HCT116 (cell line): ENCODE measurements at regions of chrX and their contacts with region 1.

Region 1: GRCh38 chrX:53071604-53072417 is 10.4 kb upstream of the TSPYL2 start:
- DNase-seq: peak; percentile 50
- ATAC-seq: peak; percentile 83
- H3K4me3 ChIP-seq: peak overlapping the region; percentile 42 to 60
- H3K27ac ChIP-seq: peak overlapping the region; percentile 63
- H3K4me1 ChIP-seq: peaks cover 4 to 26% of the 10 kb centered on the region in 2 experiments; a peak in 3 of 4 replicates
- H3K27me3 ChIP-seq: no peaks in the 10 kb centered on the region
- CTCF ChIP-seq: peak; percentile 54 to 59 (median 56); a peak in 4 of 6 replicates
- POLR2A ChIP-seq: no peak
- RAD21 ChIP-seq: peak; percentile 72

Region 2: GRCh38 chrX:53081925-53082772 is 10.3 kb after region 1 on chrX and contains the start of gene TSPYL2:
- CTCF ChIA-PET with region 1: interaction called, 4 read pairs
- POLR2A ChIA-PET with region 1: interaction called, 25 read pairs
- RAD21 ChIA-PET with region 1: no interaction called
- intact Hi-C with region 1: no loop called
- DNase-seq: peak; percentile 85
- ATAC-seq: peak; percentile 95
- H3K4me3 ChIP-seq: peak within 1 kb of the TSS; percentile 63 to 70
- H3K27ac ChIP-seq: peak within 1 kb of the TSS; percentile 51; the same call in 1 of the 2 replicates
- H3K4me1 ChIP-seq: peaks cover 0 to 7% of the 10 kb centered on the region in 2 experiments; a peak in 1 of 4 replicates
- H3K27me3 ChIP-seq: no peaks in the 10 kb centered on the region
- CTCF ChIP-seq: no peak
- POLR2A ChIP-seq: peak; percentile 97
- RAD21 ChIP-seq: no peak
- total RNA-seq, gene TSPYL2: 19.2 TPM

Region 3: DNA sequence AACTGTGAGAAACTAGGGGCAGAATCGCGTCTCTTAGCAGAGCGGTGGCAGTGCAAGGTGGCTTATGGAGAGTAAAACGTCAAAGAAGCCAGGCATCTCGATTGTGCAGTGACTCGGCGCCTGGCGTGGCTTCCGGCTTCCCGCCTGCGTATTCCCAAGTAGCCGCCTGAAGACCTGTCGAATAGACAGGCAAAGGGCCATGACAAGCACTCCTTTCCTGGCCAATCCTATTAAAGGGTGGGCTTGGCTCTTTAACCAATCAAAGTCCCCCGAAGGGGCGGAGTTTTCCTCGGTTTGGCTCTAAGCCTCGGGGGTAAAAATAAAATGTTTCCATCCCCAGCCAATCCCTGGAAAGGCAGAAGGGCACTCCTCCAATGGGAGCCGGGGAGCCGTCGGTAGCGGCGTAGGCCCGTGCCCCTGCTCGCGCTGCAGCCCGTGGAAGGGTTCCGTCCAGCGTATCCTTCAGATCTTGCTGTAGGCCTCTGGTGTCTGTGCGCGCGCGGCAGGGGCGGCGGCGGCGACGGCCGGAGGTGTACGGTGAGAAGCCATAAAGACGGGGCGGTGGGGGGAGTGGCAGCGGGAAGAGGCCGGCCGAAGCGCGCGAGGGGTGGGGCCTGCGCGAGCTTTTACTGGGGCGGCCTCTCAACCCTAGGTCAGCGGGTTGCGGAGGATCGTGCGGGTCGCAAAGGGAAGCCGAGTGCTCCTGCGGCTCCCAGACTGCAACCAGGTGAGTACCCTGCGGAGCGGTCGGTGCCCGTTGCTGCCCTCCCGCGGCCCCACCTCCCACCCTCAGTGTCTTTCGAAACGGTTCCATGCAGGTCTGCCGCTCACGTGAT is 22.2 kb after region 1 on chrX and contains the start of gene KANTR:
- CTCF ChIA-PET with region 1: no interaction called
- POLR2A ChIA-PET with region 1: no interaction called
- RAD21 ChIA-PET with region 1: no interaction called
- intact Hi-C with region 1: loop called (anchors 1 kb)
- DNase-seq: peak; percentile 90
- ATAC-seq: peak; percentile 88
- H3K4me3 ChIP-seq: peak within 1 kb of the TSS; percentile 67 to 75
- H3K27ac ChIP-seq: peak within 1 kb of the TSS; percentile 80
- H3K4me1 ChIP-seq: peaks cover 3 to 21% of the 10 kb centered on the region in 2 experiments; a peak in 3 of 4 replicates
- H3K27me3 ChIP-seq: no peaks in the 10 kb centered on the region
- CTCF ChIP-seq: no peak
- POLR2A ChIP-seq: no peak
- RAD21 ChIP-seq: no peak
- total RNA-seq, gene KANTR: 7.5 TPM